Common myeloid progenitor, CD34-positive (primary cell): ENCODE measurements at regions of chr7 and their contacts with region 1.

Region 1: DNA sequence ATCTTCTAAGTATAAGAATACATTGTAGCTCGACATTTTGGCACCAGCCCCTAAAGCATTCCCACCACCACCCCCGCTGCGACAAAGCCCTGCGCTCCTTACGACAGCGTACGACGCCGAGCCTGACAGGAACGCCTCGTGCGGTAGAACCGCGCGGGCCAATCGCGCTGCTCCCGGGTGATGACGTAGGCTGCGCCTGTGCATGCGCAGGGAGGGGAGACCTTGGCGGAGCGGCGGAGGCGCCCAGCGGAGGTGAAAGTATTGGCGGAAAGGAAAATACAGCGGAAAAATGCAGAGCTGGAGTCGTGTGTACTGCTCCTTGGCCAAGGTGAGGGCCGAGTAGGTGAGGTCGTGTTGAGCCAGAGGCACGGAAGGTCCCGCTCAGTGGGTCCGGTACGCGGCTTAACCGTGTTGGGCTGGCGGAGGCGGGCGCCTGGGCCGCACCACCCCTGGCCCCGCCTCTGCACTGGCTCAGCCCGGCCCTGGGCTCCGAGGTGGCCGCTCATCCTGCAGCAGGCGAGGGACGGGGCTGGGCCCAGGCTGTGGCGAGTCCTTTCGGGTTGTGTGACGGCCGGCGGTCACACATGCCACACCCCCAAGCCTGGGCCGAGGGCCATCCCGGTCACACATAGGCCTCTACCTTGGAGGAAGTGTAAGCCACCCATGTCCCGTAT is at the start of gene DLD:
- DNase-seq: peak; percentile 93 to 97 (median 97)
- H3K4me3 ChIP-seq: peak within 1 kb of the TSS; percentile 37 to 96 (median 85)
- H3K27ac ChIP-seq: peak within 1 kb of the TSS; percentile 96 to 98
- H3K4me1 ChIP-seq: peaks cover 13 to 32% (median 19%) of the 10 kb centered on the region in 4 experiments
- H3K27me3 ChIP-seq: no peaks in the 10 kb centered on the region

Region 2: DNA sequence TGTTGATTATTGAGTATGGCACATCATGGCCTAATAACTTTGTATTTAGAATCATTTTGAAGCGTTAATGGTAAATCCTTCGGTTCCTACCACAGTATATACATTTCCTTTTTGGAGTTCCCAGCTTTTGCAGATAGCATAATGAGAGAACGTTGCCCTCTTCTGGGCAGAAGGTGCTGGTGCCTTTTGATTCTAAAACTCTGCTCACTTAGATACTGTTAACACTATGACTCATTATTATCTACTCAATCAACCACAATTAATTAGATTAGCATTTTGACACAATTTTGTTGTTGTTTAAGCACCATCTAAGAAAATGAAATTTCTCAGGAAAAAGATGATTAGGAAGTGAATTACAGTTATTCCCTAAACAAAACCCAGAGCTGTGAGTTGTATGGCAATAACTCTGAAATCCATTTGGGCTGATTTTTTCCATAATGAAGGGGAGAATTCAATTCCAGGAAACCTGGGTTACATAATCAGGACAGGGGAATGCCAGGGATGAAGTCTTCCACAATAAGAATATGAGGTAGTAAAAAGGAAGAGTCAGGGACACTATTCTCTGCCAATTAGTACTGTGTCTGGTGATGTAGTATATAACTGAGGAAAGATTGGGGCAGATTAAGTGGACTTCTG is 11.6 kb before region 1 on chr7:
- CTCF ChIA-PET with region 1: interaction called, 54 read pairs
- POLR2A ChIA-PET with region 1: interaction called, 3 read pairs
- DNase-seq: peak; percentile 78 to 79 (median 78)
- H3K4me3 ChIP-seq: no peak overlapping the region
- H3K27ac ChIP-seq: no peak overlapping the region
- H3K4me1 ChIP-seq: peaks cover 4 to 28% (median 18%) of the 10 kb centered on the region in 4 experiments
- H3K27me3 ChIP-seq: no peaks in the 10 kb centered on the region